ENCODE measurements at regions of chr3 and their contacts with region 1.

Region 1: DNA sequence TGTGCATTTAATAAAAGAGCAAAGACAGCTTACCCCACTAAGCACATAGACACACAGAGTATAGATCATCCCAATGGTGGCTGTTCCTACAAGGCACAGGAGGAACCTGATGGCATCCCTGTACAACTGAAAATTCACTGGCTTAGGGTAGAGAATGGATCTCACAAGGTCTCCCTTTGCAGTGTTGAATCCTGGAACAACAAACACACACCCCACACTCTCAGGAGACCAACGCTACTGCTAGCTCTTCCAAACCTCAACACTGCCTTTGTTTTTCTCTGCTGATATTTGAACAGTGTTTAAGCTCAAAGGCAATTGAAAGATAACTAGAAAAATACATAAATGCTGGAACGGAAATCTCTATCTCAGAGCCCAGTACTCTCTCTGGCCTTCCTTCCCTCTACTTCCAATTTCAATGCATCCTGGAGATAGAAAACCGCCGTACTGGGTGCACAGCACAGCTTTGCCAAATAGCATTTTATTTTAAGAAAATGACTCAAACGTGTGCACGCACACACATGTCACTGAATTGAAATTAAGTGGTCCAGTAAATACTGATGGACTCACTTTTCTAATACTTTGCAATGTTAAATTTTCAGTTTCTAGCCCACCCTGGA is 87.5 kb upstream of the ATP13A5 start:
- DNase-seq: no peak
- ATAC-seq: no peak
- H3K4me3 ChIP-seq: no peak overlapping the region
- H3K27ac ChIP-seq: no peak overlapping the region
- H3K4me1 ChIP-seq: no peaks in the 10 kb centered on the region
- H3K27me3 ChIP-seq: peaks cover 42% of the 10 kb centered on the region
- CTCF ChIP-seq: no peak

Region 2: GRCh38 chr3:193040836-193041672 is 425.0 kb before region 1 on chr3:
- CTCF ChIA-PET with region 1: no interaction called
- POLR2A ChIA-PET with region 1: no interaction called
- intact Hi-C with region 1: loop called (anchors 10 kb)
- DNase-seq: peak; percentile 81
- ATAC-seq: peak; percentile 89
- H3K4me3 ChIP-seq: no peak overlapping the region
- H3K27ac ChIP-seq: no peak overlapping the region
- H3K4me1 ChIP-seq: no peaks in the 10 kb centered on the region
- H3K27me3 ChIP-seq: no peaks in the 10 kb centered on the region
- CTCF ChIP-seq: peak; percentile 83

Region 3: DNA sequence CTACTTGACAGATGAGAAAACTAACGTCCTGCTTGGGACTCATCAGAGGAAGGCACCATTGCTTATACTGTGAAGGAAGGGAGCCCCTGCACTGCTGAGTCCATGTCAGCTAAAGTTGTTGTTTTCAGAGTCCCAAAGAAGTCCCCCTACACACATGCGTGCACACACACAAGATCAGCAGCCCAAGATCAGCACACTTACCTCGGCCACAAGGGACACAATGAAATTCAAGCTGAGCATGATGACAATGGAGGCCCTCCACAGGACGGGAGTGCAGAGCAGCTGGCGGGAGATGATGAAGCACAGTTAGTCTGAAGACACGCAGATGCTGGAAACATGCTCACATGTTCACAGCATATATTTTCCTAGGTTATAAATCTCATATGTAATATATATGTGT is 59.0 kb before region 1 on chr3:
- CTCF ChIA-PET with region 1: no interaction called
- POLR2A ChIA-PET with region 1: no interaction called
- intact Hi-C with region 1: no loop called
- DNase-seq: no peak
- ATAC-seq: no peak
- H3K4me3 ChIP-seq: no peak overlapping the region
- H3K27ac ChIP-seq: no peak overlapping the region
- H3K4me1 ChIP-seq: no peaks in the 10 kb centered on the region
- H3K27me3 ChIP-seq: peaks cover 59% of the 10 kb centered on the region
- CTCF ChIP-seq: no peak

Region 4: GRCh38 chr3:193572426-193572908 is 106.4 kb after region 1 on chr3:
- CTCF ChIA-PET with region 1: no interaction called
- POLR2A ChIA-PET with region 1: no interaction called
- intact Hi-C with region 1: loop called (anchors 1 kb)
- DNase-seq: peak; percentile 80
- ATAC-seq: peak; percentile 93
- H3K4me3 ChIP-seq: no peak overlapping the region
- H3K27ac ChIP-seq: no peak overlapping the region
- H3K4me1 ChIP-seq: peaks cover 6% of the 10 kb centered on the region
- H3K27me3 ChIP-seq: peaks cover 41% of the 10 kb centered on the region
- CTCF ChIP-seq: peak; percentile 96

Region 5: DNA sequence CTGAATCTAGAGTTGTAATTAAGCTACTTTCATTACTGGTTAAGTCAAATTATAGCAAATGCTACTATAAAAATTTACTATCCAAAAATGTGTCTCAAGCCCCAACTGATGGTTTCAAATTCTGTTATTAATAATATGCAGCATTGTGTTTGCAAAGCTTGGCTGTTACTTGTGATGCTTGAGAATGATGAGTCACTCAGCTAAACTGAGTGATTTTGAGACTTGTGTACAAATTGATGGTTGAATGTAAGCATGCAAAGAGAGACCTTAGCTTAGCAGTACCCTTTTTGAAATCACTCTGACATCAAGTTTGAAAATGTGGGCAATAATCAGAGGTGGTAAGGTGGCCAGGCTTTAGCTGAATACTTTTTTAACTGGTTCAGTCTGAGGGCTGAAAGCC is 154.6 kb after region 1 on chr3:
- CTCF ChIA-PET with region 1: no interaction called
- POLR2A ChIA-PET with region 1: no interaction called
- intact Hi-C with region 1: no loop called
- DNase-seq: no peak
- ATAC-seq: peak; percentile 87
- H3K4me3 ChIP-seq: no peak overlapping the region
- H3K27ac ChIP-seq: no peak overlapping the region
- H3K4me1 ChIP-seq: no peaks in the 10 kb centered on the region
- H3K27me3 ChIP-seq: no peaks in the 10 kb centered on the region
- CTCF ChIP-seq: no peak

Region 6: GRCh38 chr3:193701904-193702635 is 236.0 kb after region 1 on chr3:
- CTCF ChIA-PET with region 1: no interaction called
- POLR2A ChIA-PET with region 1: no interaction called
- intact Hi-C with region 1: no loop called
- DNase-seq: peak; percentile 12
- ATAC-seq: no peak; the same call in 1 of the 2 replicates
- H3K4me3 ChIP-seq: no peak overlapping the region
- H3K27ac ChIP-seq: no peak overlapping the region
- H3K4me1 ChIP-seq: no peaks in the 10 kb centered on the region
- H3K27me3 ChIP-seq: no peaks in the 10 kb centered on the region
- CTCF ChIP-seq: no peak